ENCODE measurements at regions of chr16 and their contacts with region 1.

Region 1: GRCh38 chr16:19601083-19601976 is 45.8 kb downstream of the VPS35L start:
- DNase-seq: peak; percentile 39 to 51 (median 43)
- H3K4me3 ChIP-seq: no peak overlapping the region
- H3K4me3 Mint-ChIP-seq: no peak overlapping the region
- H3K27ac ChIP-seq: no peak overlapping the region
- H3K27ac Mint-ChIP-seq: peak overlapping the region in 2 of 7 donors; percentile 15 to 71
- H3K4me1 ChIP-seq: no peaks in the 10 kb centered on the region
- H3K4me1 Mint-ChIP-seq: no peaks in the 10 kb centered on the region
- H3K27me3 ChIP-seq: no peaks in the 10 kb centered on the region
- H3K27me3 Mint-ChIP-seq: no peaks in the 10 kb centered on the region

Region 2: GRCh38 chr16:19583665-19584300 is 17.5 kb before region 1 on chr16:
- CTCF ChIA-PET with region 1: interaction called, 35 read pairs
- POLR2A ChIA-PET with region 1: no interaction called
- intact Hi-C with region 1: no loop called
- DNase-seq: peak in 4 of 5 donors; percentile 28 to 38 (median 30)
- H3K4me3 ChIP-seq: no peak overlapping the region
- H3K4me3 Mint-ChIP-seq: no peak overlapping the region
- H3K27ac ChIP-seq: no peak overlapping the region
- H3K27ac Mint-ChIP-seq: peak overlapping the region in 1 of 7 donors; percentile 43
- H3K4me1 ChIP-seq: no peaks in the 10 kb centered on the region
- H3K4me1 Mint-ChIP-seq: peaks cover 0 to 3% (median 0%) of the 10 kb centered on the region in 4 donors
- H3K27me3 ChIP-seq: no peaks in the 10 kb centered on the region
- H3K27me3 Mint-ChIP-seq: no peaks in the 10 kb centered on the region

Region 3: DNA sequence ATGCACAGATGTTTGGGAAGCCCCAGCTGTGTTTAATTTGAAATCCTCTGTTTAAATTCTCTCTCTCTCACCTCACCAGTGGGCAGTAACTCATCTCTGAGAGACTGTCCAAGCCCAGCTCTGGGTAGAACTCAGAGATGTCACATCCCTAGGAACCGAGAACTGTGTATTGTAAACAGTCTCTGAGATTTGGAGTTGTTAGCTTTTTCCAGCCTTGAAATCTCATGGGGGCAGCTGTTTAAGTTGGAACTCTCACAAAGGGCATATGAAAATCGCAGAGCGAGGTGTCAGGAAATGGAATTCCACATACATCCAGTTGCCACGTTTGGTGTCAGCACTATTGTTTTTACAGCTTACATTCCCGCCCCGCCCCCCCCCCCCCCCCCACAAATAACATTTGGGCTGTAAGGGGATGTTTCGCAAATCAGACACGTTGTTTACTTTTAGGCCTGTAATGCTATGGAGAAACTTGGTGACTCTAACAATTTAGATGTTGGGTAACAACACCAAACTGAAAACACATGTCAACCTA is 11.5 kb before region 1 on chr16:
- CTCF ChIA-PET with region 1: interaction called, 35 read pairs
- POLR2A ChIA-PET with region 1: no interaction called
- intact Hi-C with region 1: no loop called
- DNase-seq: no peak
- H3K4me3 ChIP-seq: no peak overlapping the region
- H3K4me3 Mint-ChIP-seq: no peak overlapping the region
- H3K27ac ChIP-seq: no peak overlapping the region
- H3K27ac Mint-ChIP-seq: peak overlapping the region in 2 of 7 donors; percentile 59 to 69
- H3K4me1 ChIP-seq: no peaks in the 10 kb centered on the region
- H3K4me1 Mint-ChIP-seq: no peaks in the 10 kb centered on the region
- H3K27me3 ChIP-seq: no peaks in the 10 kb centered on the region
- H3K27me3 Mint-ChIP-seq: no peaks in the 10 kb centered on the region

Region 4: GRCh38 chr16:19886073-19886941 is 285.0 kb after region 1 on chr16:
- CTCF ChIA-PET with region 1: interaction called, 188 read pairs
- POLR2A ChIA-PET with region 1: interaction called, 4 read pairs
- intact Hi-C with region 1: loop called (anchors 1 kb)
- DNase-seq: peak; percentile 76 to 79 (median 76)
- H3K4me3 ChIP-seq: peak overlapping the region in 1 of 2 donors; percentile 9
- H3K4me3 Mint-ChIP-seq: peak overlapping the region; percentile 79 to 91 (median 86)
- H3K27ac ChIP-seq: no peak overlapping the region
- H3K27ac Mint-ChIP-seq: peak overlapping the region in 3 of 7 donors; percentile 60 to 89 (median 67)
- H3K4me1 ChIP-seq: peaks cover 24% of the 10 kb centered on the region
- H3K4me1 Mint-ChIP-seq: peaks cover 15 to 30% (median 23%) of the 10 kb centered on the region in 4 donors
- H3K27me3 ChIP-seq: peaks cover 12% of the 10 kb centered on the region
- H3K27me3 Mint-ChIP-seq: peaks cover 7 to 27% of the 10 kb centered on the region in 2 donors

Measured in CD4-positive, alpha-beta memory T cell (primary cell).